Endothelial cell of umbilical vein (primary cell): ENCODE measurements at regions of chr11 and their contacts with region 1.

Region 1: DNA sequence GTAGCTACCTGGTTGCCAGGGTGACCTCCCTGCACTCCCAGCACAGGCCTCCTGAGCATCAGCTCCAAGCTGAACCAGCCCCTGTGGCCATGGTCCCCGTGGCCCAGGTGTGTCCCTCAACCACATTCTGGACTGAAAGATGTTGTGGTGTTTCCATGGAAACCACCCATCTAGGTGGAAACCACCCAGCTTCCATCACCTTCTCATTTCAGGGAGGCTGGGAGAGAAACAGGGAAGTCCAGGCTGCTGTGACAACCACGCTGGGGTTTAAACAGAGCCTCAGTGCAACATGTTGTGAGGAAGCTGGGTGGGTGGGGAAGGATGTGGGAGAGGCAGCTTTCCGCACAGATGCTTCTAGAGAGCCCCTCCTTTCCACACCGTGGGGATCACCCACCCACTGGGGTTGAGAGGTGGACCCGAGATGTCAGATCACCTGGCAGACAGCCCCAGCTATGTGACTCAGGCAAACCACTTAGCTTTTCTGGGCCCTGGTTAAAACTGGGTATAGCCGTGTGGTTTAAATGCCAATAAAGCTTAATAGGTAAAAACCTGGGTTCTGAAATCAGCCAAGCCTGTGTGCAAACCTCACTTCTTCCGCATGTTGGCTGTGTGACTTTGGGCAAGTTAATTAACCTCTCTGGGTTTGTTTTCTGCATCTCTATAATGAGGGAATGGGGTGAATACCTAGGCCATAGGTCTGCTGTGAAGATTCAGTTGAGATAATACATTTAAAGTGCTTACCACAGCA is 46.4 kb downstream of the CD82 start:
- DNase-seq: no peak
- H3K4me3 ChIP-seq: no peak overlapping the region
- H3K27ac ChIP-seq: no peak overlapping the region
- H3K4me1 ChIP-seq: peaks cover 9% of the 10 kb centered on the region
- H3K27me3 ChIP-seq: no peaks in the 10 kb centered on the region
- CTCF ChIP-seq: no peak
- POLR2A ChIP-seq: no peak

Region 2: DNA sequence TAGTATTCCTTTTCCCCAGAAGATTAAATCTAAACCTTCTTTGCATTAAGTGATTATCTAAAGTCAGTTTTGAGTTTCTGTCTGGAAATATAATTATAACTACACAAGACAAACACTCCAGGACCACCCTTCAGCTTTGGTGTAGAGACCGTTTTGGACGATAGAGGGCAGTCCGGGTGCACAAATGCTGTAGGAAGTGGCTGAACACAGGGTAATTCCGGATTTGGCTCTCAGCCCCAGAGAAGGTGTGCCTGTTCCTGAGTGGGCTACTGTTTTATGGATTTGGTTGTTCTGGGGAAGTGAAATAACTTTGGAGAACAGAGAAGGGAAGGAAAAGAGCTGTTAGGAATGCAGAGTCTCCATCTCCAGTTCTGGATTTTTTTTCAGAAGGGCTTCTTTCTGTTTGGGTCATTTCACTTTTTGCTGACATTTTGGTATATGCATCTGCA is 501.6 kb before region 1 on chr11:
- CTCF ChIA-PET with region 1: interaction called, 3 read pairs
- POLR2A ChIA-PET with region 1: no interaction called
- dilution Hi-C with region 1: no loop called
- intact Hi-C with region 1: loop called (anchors 10 kb)
- DNase-seq: peak; percentile 74
- H3K4me3 ChIP-seq: no peak overlapping the region
- H3K27ac ChIP-seq: no peak overlapping the region
- H3K4me1 ChIP-seq: no peaks in the 10 kb centered on the region
- H3K27me3 ChIP-seq: no peaks in the 10 kb centered on the region
- CTCF ChIP-seq: peak; percentile 76 to 79
- POLR2A ChIP-seq: no peak

Region 3: DNA sequence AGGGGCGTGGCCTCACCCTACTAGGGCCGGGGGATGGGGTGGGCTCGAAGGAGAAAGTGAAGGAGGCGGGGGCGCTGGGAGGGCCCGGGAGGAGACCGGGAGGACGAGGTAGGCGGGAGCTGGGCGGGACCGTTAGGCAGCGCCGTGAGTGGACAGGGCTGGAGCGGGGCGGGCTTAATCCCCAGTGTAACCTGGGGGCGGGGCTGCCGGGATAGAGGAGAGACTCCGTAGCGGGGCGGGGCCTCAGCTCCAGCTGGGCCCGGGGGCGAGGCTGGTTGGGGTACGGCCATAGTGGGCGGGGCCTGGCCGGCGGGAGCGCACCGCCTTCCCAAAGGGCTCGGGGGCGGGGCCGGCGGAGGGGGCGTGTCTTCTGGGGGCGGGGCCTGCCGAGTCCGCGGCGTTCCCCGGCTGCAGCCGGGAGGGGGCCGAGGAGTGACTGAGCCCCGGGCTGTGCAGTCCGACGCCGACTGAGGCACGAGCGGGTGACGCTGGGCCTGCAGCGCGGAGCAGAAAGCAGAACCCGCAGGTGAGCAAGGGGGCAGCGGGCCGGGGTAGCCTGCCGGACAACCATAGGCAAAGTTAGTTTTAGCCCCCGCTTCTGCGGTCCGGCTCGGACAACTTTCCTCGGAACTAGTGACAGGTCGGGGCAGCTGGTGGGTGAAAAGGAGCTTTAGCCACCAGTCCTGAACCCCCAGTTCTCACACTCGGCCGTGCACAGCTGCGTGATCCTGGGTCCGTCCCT is 46.5 kb before region 1 on chr11 and contains the start of gene CD82:
- CTCF ChIA-PET with region 1: interaction called, 860 read pairs
- POLR2A ChIA-PET with region 1: interaction called, 3 read pairs
- dilution Hi-C with region 1: no loop called
- intact Hi-C with region 1: loop called (anchors 2 kb)
- DNase-seq: peak; percentile 99
- H3K4me3 ChIP-seq: peak within 1 kb of the TSS; percentile 25 to 42 (median 41)
- H3K27ac ChIP-seq: peak within 1 kb of the TSS; percentile 94
- H3K4me1 ChIP-seq: peaks cover 40% of the 10 kb centered on the region
- H3K27me3 ChIP-seq: no peaks in the 10 kb centered on the region
- CTCF ChIP-seq: peak; percentile 5 to 30
- POLR2A ChIP-seq: no peak
- total RNA-seq, gene CD82: 24.9 and 25.2 TPM in 2 replicates